Dendritic cell treated with granulocyte-macrophage colony-stimulating factor and Interleukin-4, amounts not matched to agents 40 ng/mL and 50 ng/mL, for 4 days (primary cell): ENCODE measurements at regions of chr22 and their contacts with region 1.

Region 1: DNA sequence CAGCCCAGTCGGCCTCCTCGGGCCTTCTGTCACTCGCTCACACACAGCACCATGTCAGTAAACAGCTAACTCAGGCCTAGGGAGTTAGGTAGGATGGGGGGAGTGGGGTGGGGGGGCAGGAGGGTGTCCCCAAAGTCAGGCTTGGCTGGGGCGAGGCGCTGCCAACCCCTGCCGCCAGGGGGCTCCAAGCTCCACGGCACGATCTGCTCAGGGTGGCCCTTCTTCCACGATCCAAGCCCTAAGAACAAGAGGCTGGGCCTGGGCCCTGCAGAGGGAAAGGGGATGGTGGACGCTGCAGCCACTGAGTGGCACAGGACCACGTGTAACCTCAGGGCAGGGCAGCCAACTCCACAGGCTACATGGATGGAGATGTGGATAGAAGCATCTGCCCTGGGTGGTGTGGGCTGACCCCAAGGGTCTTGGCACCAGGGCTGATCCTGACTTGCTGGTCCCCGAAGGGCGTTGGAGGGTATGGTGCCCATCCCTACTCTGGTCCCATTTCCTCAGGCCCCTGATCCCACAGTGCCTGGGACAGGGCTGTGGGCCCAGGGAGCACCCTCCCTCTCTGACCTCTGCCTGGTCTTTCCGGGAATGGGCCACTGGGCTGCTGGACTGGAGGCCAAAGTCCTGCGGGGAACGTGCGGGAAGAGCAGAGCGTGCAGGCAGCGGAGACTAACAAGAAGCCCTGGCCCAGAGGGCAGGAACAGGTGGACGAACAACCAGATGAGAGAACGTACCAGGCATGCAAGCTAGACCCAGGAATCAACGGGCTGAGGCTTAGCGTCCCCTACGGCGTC is 29.1 kb upstream of the TXNRD2 start:
- H3K4me3 Mint-ChIP-seq: no peak overlapping the region
- H3K27ac Mint-ChIP-seq: no peak overlapping the region
- H3K4me1 Mint-ChIP-seq: peaks cover 19% of the 10 kb centered on the region
- H3K27me3 Mint-ChIP-seq: peaks cover 16% of the 10 kb centered on the region

Region 2: DNA sequence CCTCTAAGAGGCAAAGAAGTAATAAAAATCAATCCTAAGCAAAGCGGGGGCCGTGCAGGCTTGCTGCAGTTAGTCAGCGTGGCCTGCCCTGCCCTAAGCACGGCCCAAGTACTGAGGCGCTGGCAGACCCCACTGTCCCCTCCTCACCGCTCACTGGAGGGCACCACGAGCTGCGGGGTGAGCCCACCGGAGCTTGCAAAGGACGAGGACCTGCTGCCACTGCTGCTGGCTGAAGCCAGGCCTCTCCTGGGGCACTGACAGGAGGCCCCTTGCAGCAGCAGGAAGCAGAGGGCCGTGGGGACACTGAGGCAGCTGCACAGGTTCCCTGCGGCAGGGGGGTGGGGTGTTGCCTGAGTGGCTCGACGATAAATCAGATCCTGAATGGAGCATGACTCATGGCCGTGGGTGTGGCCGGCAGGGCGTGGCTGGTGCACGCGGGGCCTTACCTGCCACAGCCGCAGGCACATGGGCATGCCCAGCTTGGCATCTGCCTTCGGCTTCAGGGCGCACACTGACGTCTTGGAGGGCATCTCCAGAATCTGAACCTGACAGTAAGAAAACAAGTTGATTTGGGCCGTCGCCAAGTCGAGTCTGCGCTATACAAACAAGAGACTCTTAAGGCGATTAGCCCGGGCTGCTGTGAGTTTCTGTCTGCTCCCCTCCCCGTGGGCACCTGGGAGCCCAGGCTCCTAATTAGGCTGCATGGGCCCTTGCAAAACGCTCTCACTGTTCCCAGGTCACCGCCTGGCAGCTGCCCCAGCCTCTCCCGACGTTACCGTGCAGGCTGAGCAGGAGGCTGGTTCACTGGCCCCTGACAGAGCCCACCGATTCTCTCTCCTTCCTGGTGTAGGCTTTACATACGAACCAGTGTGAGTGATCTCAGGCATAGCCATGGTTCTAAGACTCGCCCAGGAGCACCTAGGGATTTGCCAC is 164.2 kb before region 1 on chr22:
- intact Hi-C with region 1: no loop called
- H3K4me3 Mint-ChIP-seq: no peak overlapping the region
- H3K27ac Mint-ChIP-seq: no peak overlapping the region
- H3K4me1 Mint-ChIP-seq: no peaks in the 10 kb centered on the region
- H3K27me3 Mint-ChIP-seq: no peaks in the 10 kb centered on the region

Region 3: GRCh38 chr22:20013382-20013871 is 42.8 kb after region 1 on chr22:
- intact Hi-C with region 1: loop called (anchors 1 kb)
- H3K4me3 Mint-ChIP-seq: no peak overlapping the region
- H3K27ac Mint-ChIP-seq: no peak overlapping the region
- H3K4me1 Mint-ChIP-seq: peaks cover 18% of the 10 kb centered on the region
- H3K27me3 Mint-ChIP-seq: peaks cover 40% of the 10 kb centered on the region